AG04450 (cell line): ENCODE measurements at regions of chr16 and their contacts with region 1.

Region 1: GRCh38 chr16:85010931-85011845 is at the start of gene ZDHHC7:
- DNase-seq: peak; percentile 45
- H3K4me3 ChIP-seq: peak within 1 kb of the TSS; percentile 92
- H3K27ac ChIP-seq: peak within 1 kb of the TSS; percentile 98
- H3K27me3 ChIP-seq: no peaks in the 10 kb centered on the region
- CTCF ChIP-seq: no peak
- polyA plus RNA-seq, gene ZDHHC7: 136 and 150 TPM in 2 replicates

Region 2: DNA sequence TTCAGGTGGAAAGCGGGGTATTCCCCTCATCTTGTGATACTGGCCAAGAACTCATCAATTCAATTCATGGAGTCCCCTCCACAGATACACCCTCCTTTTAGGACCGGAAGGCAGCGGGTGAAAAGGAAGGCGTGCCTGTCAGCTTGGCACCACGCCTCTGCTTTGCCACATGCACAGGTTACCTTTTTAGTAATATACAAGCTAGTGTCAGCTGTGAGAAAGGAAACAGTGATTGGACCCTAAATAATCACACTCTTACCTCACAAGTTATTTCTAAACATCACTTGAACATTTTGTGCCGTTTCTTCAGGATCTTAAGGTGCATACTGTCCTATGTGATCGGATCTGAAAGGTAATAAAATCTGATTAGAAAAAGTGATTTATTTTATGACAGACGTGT is 15.5 kb before region 1 on chr16:
- CTCF ChIA-PET with region 1: no interaction called
- POLR2A ChIA-PET with region 1: interaction called, 27 read pairs
- DNase-seq: no peak
- H3K4me3 ChIP-seq: no peak overlapping the region
- H3K27ac ChIP-seq: peak overlapping the region; percentile 100
- H3K27me3 ChIP-seq: no peaks in the 10 kb centered on the region
- CTCF ChIP-seq: no peak

Region 3: DNA sequence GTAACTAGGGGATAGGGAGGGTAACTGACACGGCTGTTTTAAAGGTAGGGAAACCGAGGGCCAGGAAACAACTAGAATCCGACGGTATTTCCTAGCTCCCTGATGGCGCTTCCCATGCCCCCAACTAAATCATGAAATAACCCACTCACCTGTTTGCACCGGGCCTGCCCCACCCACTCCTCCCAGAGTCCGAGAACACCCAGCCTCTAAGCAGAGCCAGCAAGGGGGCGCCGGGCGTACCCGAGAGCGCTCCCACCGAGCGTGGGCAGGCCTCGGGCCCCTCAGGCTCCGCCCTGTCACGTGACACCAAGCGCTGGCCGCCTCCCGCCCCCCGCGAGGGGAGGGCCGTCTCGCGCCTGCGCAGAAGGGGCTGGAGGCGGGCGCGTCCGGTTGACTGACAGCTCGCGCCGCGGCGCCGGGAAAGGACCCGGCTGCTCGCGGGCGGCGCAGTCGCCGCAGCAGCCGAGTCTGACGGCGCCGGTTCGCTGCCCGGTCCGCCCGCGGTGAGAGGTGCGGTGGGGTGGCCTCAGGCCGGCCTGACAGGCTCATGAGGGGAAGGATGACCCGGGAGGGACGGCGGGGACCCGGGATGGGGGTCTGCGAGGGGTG is 16.3 kb after region 1 on chr16 and contains the start of gene KIAA0513:
- CTCF ChIA-PET with region 1: interaction called, 6 read pairs
- POLR2A ChIA-PET with region 1: interaction called, 13 read pairs
- DNase-seq: peak; percentile 84
- H3K4me3 ChIP-seq: peak within 1 kb of the TSS; percentile 82
- H3K27ac ChIP-seq: peak within 1 kb of the TSS; percentile 65
- H3K27me3 ChIP-seq: no peaks in the 10 kb centered on the region
- CTCF ChIP-seq: peak; percentile 42
- polyA plus RNA-seq, gene KIAA0513: 10.0 and 10.1 TPM in 2 replicates